H1 (cell line): ENCODE measurements at regions of chr10 and their contacts with region 1.

Region 1: GRCh38 chr10:100743626-100744135 is 1.7 kb upstream of the PAX2 start:
- DNase-seq: no peak
- H3K4me3 ChIP-seq: peak overlapping the region in 1 of 4 experiments; percentile 57; a peak in 3 of 8 replicates
- H3K27ac ChIP-seq: no peak overlapping the region
- H3K4me1 ChIP-seq: peaks cover 0 to 33% (median 26%) of the 10 kb centered on the region in 4 experiments; a peak in 6 of 7 replicates
- H3K27me3 ChIP-seq: peaks cover 79 to 94% (median 92%) of the 10 kb centered on the region in 4 experiments
- CTCF ChIP-seq: peak; percentile 70 to 84 (median 83)
- EP300 ChIP-seq: no peak
- POLR2A ChIP-seq: no peak
- RAD21 ChIP-seq: peak; percentile 80

Region 2: GRCh38 chr10:100569618-100570473 is 173.8 kb before region 1 on chr10:
- CTCF ChIA-PET with region 1: interaction called, 110 read pairs
- POLR2A ChIA-PET with region 1: interaction called, 7 read pairs
- DNase-seq: peak in 1 of 2 experiments; percentile 71
- H3K4me3 ChIP-seq: peak overlapping the region; percentile 52 to 78 (median 67)
- H3K27ac ChIP-seq: no peak overlapping the region
- H3K4me1 ChIP-seq: peaks cover 0 to 4% (median 2%) of the 10 kb centered on the region in 4 experiments; a peak in 4 of 7 replicates
- H3K27me3 ChIP-seq: peaks cover 0 to 24% (median 10%) of the 10 kb centered on the region in 4 experiments; a peak in 6 of 7 replicates
- CTCF ChIP-seq: peak; percentile 78 to 88 (median 83)
- EP300 ChIP-seq: no peak; a peak in 1 of 3 replicates
- POLR2A ChIP-seq: no peak
- RAD21 ChIP-seq: peak; percentile 49 to 72

Region 3: DNA sequence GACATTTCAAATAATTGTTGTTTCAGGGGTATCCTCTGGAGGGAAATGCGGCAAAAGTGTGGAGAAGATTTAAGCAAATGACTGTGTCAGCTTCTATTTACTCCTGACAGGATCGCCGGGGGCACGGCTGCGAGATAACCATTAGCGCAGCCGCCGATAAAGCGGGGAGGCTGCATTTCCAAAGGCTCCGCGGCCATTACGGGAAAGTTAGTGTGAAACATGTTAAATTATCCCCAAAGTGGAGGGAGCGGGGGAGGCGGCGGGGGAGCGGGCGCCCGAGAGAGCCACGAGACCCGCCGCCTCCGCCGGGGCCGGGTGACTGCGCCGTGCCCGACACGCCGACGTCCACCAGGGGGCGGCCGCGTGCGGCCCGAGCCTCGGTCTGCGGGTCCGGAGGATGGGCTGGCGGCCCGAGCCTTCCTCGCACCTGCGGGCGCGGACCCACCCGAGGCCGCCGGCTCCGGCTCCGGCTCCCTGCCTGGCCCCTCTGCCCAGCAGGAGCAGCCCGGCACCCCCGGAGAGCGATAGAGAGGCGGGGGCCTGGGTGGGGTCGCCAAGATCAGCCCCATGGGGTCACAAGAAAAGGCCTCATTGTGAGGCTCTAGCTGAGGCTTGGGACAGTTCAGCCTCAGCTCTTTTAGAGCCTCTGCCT is 72.7 kb before region 1 on chr10:
- CTCF ChIA-PET with region 1: interaction called, 12 read pairs
- POLR2A ChIA-PET with region 1: interaction called, 4 read pairs
- DNase-seq: peak in 1 of 2 experiments; percentile 94
- H3K4me3 ChIP-seq: peak overlapping the region; percentile 22 to 54 (median 36); a peak in 5 of 8 replicates
- H3K27ac ChIP-seq: no peak overlapping the region
- H3K4me1 ChIP-seq: peaks cover 4 to 15% (median 9%) of the 10 kb centered on the region in 4 experiments
- H3K27me3 ChIP-seq: peaks cover 2 to 37% (median 27%) of the 10 kb centered on the region in 4 experiments
- CTCF ChIP-seq: peak; percentile 77 to 87 (median 86)
- EP300 ChIP-seq: no peak
- POLR2A ChIP-seq: no peak
- RAD21 ChIP-seq: peak; percentile 43 to 73

Region 4: DNA sequence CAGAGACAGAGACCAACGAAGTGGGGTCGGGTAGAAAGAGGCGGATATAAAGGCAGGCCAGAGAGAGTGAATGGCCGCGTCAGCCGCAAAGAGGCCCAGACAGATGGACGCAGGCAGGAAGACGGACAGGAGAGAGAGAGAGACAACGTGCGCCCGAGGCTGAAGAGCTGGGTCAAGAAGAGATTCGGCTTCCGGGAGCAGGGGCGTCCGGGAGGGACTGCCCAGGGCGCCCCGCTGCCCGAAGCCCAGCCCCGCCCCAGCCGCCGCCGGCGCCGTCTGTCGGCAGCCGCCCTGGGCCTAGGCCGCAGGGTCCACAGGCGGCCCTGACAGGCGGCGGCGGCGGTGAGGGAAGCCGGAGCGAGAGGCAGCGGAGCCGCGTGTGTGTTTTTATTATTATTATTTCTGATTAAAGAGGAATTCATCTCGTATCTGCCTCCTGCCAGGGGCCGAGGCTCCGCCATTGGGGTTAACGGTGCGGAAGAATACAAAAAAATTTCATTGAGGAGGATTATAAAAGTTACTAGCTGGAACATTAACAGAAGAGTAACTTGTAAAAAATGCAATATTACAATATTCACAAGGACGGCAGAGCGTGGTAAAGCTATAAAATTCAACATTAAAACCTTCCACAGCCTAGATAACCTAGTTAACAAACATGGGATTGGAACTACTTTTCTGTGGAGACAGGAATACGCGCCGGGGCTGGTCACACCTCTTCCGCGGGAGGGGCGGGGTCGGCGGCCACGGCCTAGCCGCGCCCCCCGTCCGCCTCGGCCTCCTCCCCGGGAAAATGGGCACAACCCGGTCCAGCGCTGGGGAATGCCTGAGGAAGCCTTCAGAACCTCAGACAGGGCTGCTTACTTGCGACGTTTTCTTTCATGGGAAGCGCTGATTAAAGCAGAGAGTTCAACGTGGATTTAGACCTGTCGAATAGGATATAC is 28.0 kb before region 1 on chr10:
- CTCF ChIA-PET with region 1: interaction called, 44 read pairs
- POLR2A ChIA-PET with region 1: interaction called, 7 read pairs
- DNase-seq: peak in 1 of 2 experiments; percentile 80
- H3K4me3 ChIP-seq: peak overlapping the region; percentile 41 to 65 (median 51)
- H3K27ac ChIP-seq: no peak overlapping the region
- H3K4me1 ChIP-seq: peaks cover 0 to 5% (median 3%) of the 10 kb centered on the region in 4 experiments; a peak in 1 of 7 replicates
- H3K27me3 ChIP-seq: peaks cover 72 to 91% (median 88%) of the 10 kb centered on the region in 4 experiments
- CTCF ChIP-seq: no peak
- EP300 ChIP-seq: no peak
- POLR2A ChIP-seq: no peak
- RAD21 ChIP-seq: no peak

Region 5: GRCh38 chr10:100817268-100817839 is 73.7 kb after region 1 on chr10:
- CTCF ChIA-PET with region 1: interaction called, 63 read pairs
- POLR2A ChIA-PET with region 1: no interaction called
- DNase-seq: no peak
- H3K4me3 ChIP-seq: no peak overlapping the region
- H3K27ac ChIP-seq: no peak overlapping the region
- H3K4me1 ChIP-seq: peaks cover 0 to 5% (median 1%) of the 10 kb centered on the region in 4 experiments; a peak in 1 of 7 replicates
- H3K27me3 ChIP-seq: peaks cover 6 to 41% (median 18%) of the 10 kb centered on the region in 4 experiments
- CTCF ChIP-seq: peak; percentile 84 to 87 (median 86)
- EP300 ChIP-seq: no peak
- POLR2A ChIP-seq: no peak
- RAD21 ChIP-seq: peak; percentile 88 to 94

Region 6: GRCh38 chr10:100841528-100841927 is 97.8 kb after region 1 on chr10:
- CTCF ChIA-PET with region 1: no interaction called
- POLR2A ChIA-PET with region 1: no interaction called
- DNase-seq: no peak
- H3K4me3 ChIP-seq: no peak overlapping the region
- H3K27ac ChIP-seq: no peak overlapping the region
- H3K4me1 ChIP-seq: no peaks in the 10 kb centered on the region
- H3K27me3 ChIP-seq: peaks cover 0 to 4% (median 0%) of the 10 kb centered on the region in 4 experiments; a peak in 3 of 7 replicates
- CTCF ChIP-seq: no peak
- EP300 ChIP-seq: no peak
- POLR2A ChIP-seq: no peak
- RAD21 ChIP-seq: no peak

Region 7: GRCh38 chr10:100878291-100878910 is 134.7 kb after region 1 on chr10:
- CTCF ChIA-PET with region 1: interaction called, 57 read pairs
- POLR2A ChIA-PET with region 1: interaction called, 4 read pairs
- DNase-seq: peak; percentile 31 to 71
- H3K4me3 ChIP-seq: no peak overlapping the region
- H3K27ac ChIP-seq: no peak overlapping the region
- H3K4me1 ChIP-seq: peaks cover 0 to 12% (median 7%) of the 10 kb centered on the region in 4 experiments; a peak in 5 of 7 replicates
- H3K27me3 ChIP-seq: peaks cover 0 to 13% (median 6%) of the 10 kb centered on the region in 4 experiments; a peak in 4 of 7 replicates
- CTCF ChIP-seq: peak; percentile 66 to 90 (median 85)
- EP300 ChIP-seq: no peak
- POLR2A ChIP-seq: no peak
- RAD21 ChIP-seq: peak; percentile 97 to 98

Region 8: DNA sequence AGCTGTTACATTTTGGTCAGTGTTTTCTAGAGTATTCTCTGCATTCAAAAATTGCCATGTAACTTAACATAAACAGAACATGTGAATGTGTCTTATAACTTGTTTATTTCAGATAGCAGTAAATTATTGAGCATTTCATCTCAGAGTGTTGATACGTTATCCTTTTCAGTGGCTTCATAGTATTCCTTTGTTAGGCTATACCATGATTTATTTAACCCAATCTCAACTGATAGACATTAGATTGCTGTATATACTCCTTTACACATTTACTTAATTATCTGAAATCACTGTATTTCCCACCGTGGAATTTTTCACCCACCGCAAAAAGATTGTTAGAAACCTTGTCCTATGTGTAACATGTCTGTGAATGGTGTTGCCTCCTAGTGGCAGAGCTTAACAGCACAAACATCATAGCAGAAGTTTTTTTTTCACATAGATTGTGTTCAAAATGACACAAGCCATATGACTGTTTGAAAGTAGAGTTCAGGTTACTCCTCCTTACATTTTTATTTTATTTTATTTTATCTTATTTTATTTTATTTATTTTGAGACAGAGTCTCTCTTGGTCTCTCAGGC is 190.5 kb after region 1 on chr10:
- CTCF ChIA-PET with region 1: no interaction called
- POLR2A ChIA-PET with region 1: no interaction called
- DNase-seq: no peak
- H3K4me3 ChIP-seq: no peak overlapping the region
- H3K27ac ChIP-seq: no peak overlapping the region
- H3K4me1 ChIP-seq: no peaks in the 10 kb centered on the region
- H3K27me3 ChIP-seq: no peaks in the 10 kb centered on the region
- CTCF ChIP-seq: peak in 2 of 3 experiments; percentile 36 to 70; a peak in 2 of 4 replicates
- EP300 ChIP-seq: no peak
- POLR2A ChIP-seq: no peak
- RAD21 ChIP-seq: peak in 1 of 2 experiments; percentile 19; a peak in 2 of 4 replicates

Region 9: DNA sequence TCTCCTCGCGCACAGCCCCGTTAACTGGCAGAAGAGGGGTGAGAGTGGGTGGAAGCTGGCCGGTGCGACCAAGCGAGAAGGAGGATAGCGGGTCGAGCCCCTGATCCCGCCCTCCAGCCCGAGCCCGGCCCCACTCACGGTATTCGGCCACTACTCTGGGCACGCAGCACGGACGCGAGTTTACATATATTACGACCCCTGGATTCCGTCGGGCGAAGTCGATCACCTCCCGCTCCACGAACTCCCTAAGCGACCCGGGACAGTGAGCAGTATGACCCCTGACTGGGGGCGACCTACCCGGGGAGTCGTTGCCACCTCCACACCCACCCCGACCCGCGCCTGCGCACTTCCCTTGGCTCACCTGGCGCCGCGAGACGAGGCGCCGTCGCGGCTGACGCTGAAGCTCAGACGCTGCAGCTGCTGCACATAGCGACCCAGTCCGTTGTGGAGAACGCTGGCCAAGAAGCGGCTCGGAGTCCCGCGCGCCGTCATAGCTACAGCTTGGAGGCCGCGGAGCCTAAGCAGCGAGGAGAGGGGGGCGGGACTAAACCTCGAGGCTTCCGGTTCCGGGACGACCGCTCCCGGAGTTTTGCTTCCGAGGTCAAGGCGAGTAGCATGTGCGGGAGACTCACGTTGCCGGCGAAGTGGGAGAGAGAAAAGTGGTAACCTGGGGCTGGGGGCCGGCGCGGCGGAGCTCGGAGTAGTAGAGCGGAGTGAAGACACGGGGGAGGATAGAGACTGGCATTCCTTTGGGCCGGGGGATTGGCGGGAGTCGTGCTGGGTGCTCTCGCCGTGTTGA is 243.5 kb after region 1 on chr10 and contains the starts of genes MRPL43 and TWNK:
- CTCF ChIA-PET with region 1: no interaction called
- POLR2A ChIA-PET with region 1: no interaction called
- DNase-seq: peak in 1 of 2 experiments; percentile 92
- H3K4me3 ChIP-seq: peak within 1 kb of the TSS; percentile 68 to 92 (median 80)
- H3K27ac ChIP-seq: peak within 1 kb of the TSS; percentile 37
- H3K4me1 ChIP-seq: peaks cover 0 to 12% (median 5%) of the 10 kb centered on the region in 4 experiments; a peak in 4 of 7 replicates
- H3K27me3 ChIP-seq: no peaks in the 10 kb centered on the region
- CTCF ChIP-seq: no peak
- EP300 ChIP-seq: no peak
- POLR2A ChIP-seq: peak; percentile 36 to 63; a peak in 2 of 3 replicates
- RAD21 ChIP-seq: no peak
- total RNA-seq, gene MRPL43: 74.1 and 80.9 TPM in 2 replicates
- total RNA-seq, gene TWNK: 32.5 and 34.9 TPM in 2 replicates